Calu3 (cell line): ENCODE measurements at regions of chr18 and their contacts with region 1.

Region 1: DNA sequence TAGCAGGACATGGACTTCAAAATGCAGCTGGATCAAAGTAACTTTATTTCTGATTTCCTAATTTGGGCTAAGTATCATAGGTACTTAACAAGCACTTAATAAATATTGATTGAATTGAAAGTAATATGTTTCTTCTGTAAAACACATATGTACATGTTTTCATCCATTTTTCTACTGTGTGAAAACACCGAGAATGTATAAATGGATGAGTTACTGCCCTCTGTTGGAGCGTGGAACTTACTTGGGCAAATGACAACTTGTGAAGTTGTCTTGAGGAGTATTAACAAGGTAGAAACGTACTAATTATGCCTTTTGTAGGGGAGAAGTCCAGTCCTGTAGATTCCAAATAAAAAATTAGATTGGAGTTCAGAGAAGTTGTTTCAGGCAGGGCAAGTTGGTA is 87.2 kb downstream of the PHLPP1 start:
- DNase-seq: no peak
- H3K4me3 Mint-ChIP-seq: no peak overlapping the region
- H3K27ac Mint-ChIP-seq: no peak overlapping the region
- H3K4me1 Mint-ChIP-seq: peaks cover 36% of the 10 kb centered on the region
- H3K27me3 Mint-ChIP-seq: no peaks in the 10 kb centered on the region
- CTCF ChIP-seq: no peak

Region 2: GRCh38 chr18:62767321-62767720 is 35.2 kb before region 1 on chr18:
- CTCF ChIA-PET with region 1: no interaction called
- intact Hi-C with region 1: loop called (anchors 5 kb)
- DNase-seq: peak; percentile 6
- H3K4me3 Mint-ChIP-seq: peak overlapping the region; percentile 13
- H3K27ac Mint-ChIP-seq: peak overlapping the region; percentile 45
- H3K4me1 Mint-ChIP-seq: peaks cover 60% of the 10 kb centered on the region
- H3K27me3 Mint-ChIP-seq: no peaks in the 10 kb centered on the region
- CTCF ChIP-seq: no peak